ENCODE measurements at regions of chr2 and their contacts with region 1.

Region 1: GRCh38 chr2:106030287-106031268 is 163.5 kb downstream of the UXS1 start:
- DNase-seq: peak; percentile 54 to 71
- ATAC-seq: peak; percentile 91 to 96
- H3K4me3 ChIP-seq: peak overlapping the region in 3 of 4 donors; percentile 1 to 26 (median 22)
- H3K27ac ChIP-seq: peak overlapping the region; percentile 72 to 83 (median 78)
- H3K4me1 ChIP-seq: peaks cover 18 to 33% of the 10 kb centered on the region in 2 donors
- H3K27me3 ChIP-seq: no peaks in the 10 kb centered on the region
- CTCF ChIP-seq: no peak
- POLR2A ChIP-seq: no peak

Region 2: DNA sequence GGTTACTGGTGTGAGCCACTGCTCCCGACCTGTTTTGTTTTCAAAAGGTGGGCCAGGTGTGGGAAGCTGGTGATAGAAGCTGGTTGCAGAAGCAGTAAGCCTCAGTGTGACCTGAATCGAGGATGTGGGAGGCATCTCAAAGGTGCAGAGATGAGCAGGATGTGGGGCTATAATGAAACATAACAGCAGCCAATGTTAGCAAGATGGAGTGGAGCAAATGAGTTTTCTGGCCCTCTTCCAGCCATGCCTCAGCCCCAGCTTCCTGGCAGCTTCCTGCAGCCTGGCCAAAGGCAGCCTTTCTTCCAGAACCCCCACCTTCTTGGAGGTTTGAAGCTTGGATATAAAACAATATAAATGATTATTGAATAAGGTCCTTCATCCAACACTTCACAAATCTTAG is 101.1 kb before region 1 on chr2:
- in situ Hi-C with region 1: loop called in 1 of 4 experiments (anchors 25 kb)
- intact Hi-C with region 1: no loop called
- DNase-seq: no peak
- ATAC-seq: no peak
- H3K4me3 ChIP-seq: no peak overlapping the region
- H3K27ac ChIP-seq: no peak overlapping the region
- H3K4me1 ChIP-seq: peaks cover 6 to 9% of the 10 kb centered on the region in 2 donors
- H3K27me3 ChIP-seq: no peaks in the 10 kb centered on the region
- CTCF ChIP-seq: no peak
- POLR2A ChIP-seq: no peak

Region 3: GRCh38 chr2:105990624-105991023 is 40.0 kb before region 1 on chr2:
- in situ Hi-C with region 1: no loop called
- intact Hi-C with region 1: no loop called
- DNase-seq: no peak
- ATAC-seq: no peak
- H3K4me3 ChIP-seq: no peak overlapping the region
- H3K27ac ChIP-seq: no peak overlapping the region
- H3K4me1 ChIP-seq: no peaks in the 10 kb centered on the region
- H3K27me3 ChIP-seq: no peaks in the 10 kb centered on the region
- CTCF ChIP-seq: no peak
- POLR2A ChIP-seq: no peak

Measured in gastrocnemius medialis (tissue), 4 donors.